Activated CD4-positive, alpha-beta T cell treated with anti-CD3 and anti-CD28 coated beads for 36 hours (primary cell): ENCODE measurements at regions of chr7 and their contacts with region 1.

Region 1: DNA sequence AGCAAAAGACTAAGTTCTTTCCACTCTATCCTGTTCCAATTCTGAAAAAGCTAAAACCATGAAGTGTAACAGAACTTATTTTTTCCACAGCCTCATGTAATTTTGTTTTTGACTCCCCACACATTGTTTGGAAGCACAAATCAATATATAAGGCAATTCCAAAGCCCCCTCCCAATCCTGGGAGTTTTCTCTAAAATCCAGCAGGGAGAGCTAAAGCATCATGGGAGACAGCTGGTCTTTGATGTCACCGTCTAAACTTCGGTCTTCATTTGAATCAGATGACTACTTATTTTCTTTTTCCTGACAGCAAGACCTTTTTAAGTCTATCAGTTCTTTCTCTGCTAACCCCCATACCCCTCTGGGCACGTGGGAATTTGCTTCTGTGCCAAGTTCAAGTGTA is 33.3 kb upstream of the PON1 start:
- DNase-seq: no peak
- ATAC-seq: no peak
- H3K4me3 Mint-ChIP-seq: no peak overlapping the region
- H3K27ac Mint-ChIP-seq: no peak overlapping the region
- H3K4me1 Mint-ChIP-seq: no peaks in the 10 kb centered on the region
- H3K27me3 Mint-ChIP-seq: peaks cover 7% of the 10 kb centered on the region

Region 2: GRCh38 chr7:94769726-94770125 is 587.9 kb before region 1 on chr7:
- CTCF ChIA-PET with region 1: no interaction called
- POLR2A ChIA-PET with region 1: no interaction called
- intact Hi-C with region 1: loop called in 1 of 2 experiments (anchors 5 kb)
- DNase-seq: no peak
- ATAC-seq: no peak
- H3K4me3 Mint-ChIP-seq: no peak overlapping the region
- H3K27ac Mint-ChIP-seq: no peak overlapping the region
- H3K4me1 Mint-ChIP-seq: no peaks in the 10 kb centered on the region
- H3K27me3 Mint-ChIP-seq: peaks cover 3% of the 10 kb centered on the region

Region 3: DNA sequence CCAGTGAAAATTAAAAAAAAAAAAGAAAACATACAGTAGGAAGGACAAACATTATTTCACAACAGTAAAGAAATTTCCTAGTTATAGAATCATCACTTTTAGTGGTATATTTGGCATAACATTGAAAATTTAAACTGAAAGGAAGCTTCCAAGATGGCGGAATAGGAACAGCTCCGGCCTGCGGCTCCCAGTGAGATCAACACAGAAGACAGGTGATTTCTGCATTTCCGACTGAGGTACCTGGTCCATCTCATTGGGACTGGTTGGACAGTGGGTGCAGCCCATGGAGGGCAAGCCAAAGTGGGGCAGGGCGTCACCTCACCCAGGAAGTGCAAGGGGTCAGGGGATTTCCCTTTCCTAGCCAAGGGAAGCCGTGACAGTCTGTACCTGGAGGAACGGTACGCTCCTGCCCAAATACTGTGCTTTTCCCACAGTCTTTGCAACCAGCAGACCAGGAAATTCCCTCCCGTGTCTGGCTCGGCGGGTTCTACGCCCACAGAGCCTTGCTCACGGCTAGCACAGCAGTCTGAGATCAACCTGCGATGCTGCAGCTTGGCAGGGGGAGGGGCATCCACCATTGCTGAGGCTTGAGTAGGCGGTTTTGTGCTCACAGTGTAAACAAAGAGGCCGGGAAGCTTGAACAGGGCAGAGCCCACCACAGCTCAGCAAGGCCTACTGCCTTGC is 19.2 kb after region 1 on chr7:
- CTCF ChIA-PET with region 1: no interaction called
- POLR2A ChIA-PET with region 1: no interaction called
- intact Hi-C with region 1: no loop called
- DNase-seq: peak; percentile 15
- ATAC-seq: no peak
- H3K4me3 Mint-ChIP-seq: no peak overlapping the region
- H3K27ac Mint-ChIP-seq: no peak overlapping the region
- H3K4me1 Mint-ChIP-seq: no peaks in the 10 kb centered on the region
- H3K27me3 Mint-ChIP-seq: peaks cover 8% of the 10 kb centered on the region